ENCODE measurements at regions of chr5 and their contacts with region 1.

Region 1: DNA sequence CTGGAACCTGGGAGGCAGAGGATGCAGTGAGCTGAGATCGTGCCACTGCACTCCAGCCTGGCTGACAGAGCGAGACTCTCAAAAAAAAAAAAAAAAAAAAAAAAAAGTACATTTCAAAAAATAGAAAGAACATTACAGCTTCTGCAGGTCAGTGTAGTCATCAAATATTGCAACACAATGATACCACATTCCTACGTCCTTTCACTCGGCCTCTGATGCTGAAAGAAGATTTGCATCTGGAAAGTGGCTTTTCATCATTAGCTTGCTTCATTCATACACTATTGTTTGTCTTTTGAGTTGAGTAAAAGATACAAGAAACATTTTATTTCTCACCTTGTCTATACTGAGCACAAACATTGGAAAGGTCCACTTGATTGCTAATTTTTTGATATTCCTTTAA is 59.6 kb upstream of the CPLANE1 start:
- DNase-seq: no peak
- H3K4me3 ChIP-seq: no peak overlapping the region
- H3K27ac ChIP-seq: no peak overlapping the region
- H3K4me1 ChIP-seq: no peaks in the 10 kb centered on the region
- CTCF ChIP-seq: no peak

Region 2: DNA sequence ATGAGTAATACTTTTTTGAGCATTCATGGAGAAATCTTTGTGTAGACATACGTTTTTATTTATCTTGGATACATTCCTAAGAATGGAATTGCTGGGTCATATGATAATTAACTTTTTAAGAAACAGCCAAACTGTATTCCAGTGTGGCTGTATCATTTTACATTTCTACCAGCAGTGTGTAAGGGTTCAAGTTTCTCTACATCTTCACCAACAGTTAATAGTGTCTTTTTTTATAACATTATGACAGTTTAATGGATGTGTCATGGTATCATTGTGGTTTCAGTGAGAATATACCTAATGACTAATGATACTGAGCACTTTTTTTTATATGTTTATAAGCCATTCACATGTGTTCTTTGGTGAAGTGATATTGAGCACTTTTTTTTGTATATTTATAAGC is 379.8 kb before region 1 on chr5:
- CTCF ChIA-PET with region 1: no interaction called
- POLR2A ChIA-PET with region 1: no interaction called
- intact Hi-C with region 1: no loop called
- DNase-seq: no peak
- H3K4me3 ChIP-seq: no peak overlapping the region
- H3K27ac ChIP-seq: no peak overlapping the region
- H3K4me1 ChIP-seq: no peaks in the 10 kb centered on the region
- CTCF ChIP-seq: no peak

Region 3: GRCh38 chr5:37355166-37355565 is 46.4 kb after region 1 on chr5:
- CTCF ChIA-PET with region 1: no interaction called
- POLR2A ChIA-PET with region 1: interaction called, 3 read pairs
- intact Hi-C with region 1: loop called (anchors 10 kb)
- DNase-seq: no peak
- H3K4me3 ChIP-seq: no peak overlapping the region
- H3K27ac ChIP-seq: no peak overlapping the region
- H3K4me1 ChIP-seq: no peaks in the 10 kb centered on the region
- CTCF ChIP-seq: no peak